ENCODE measurements at regions of chr4 and their contacts with region 1.

Region 1: GRCh38 chr4:164949448-164950143 is 27.9 kb downstream of the TRIM61 start:
- H3K4me3 ChIP-seq: no peak overlapping the region
- H3K27ac ChIP-seq: no peak overlapping the region
- H3K4me1 ChIP-seq: no peaks in the 10 kb centered on the region
- CTCF ChIP-seq: no peak

Region 2: GRCh38 chr4:164856396-164856795 is 93.2 kb before region 1 on chr4:
- CTCF ChIA-PET with region 1: no interaction called
- POLR2A ChIA-PET with region 1: no interaction called
- H3K4me3 ChIP-seq: no peak overlapping the region
- H3K27ac ChIP-seq: no peak overlapping the region
- H3K4me1 ChIP-seq: no peaks in the 10 kb centered on the region
- CTCF ChIP-seq: no peak

Region 3: GRCh38 chr4:164894702-164895101 is 54.9 kb before region 1 on chr4:
- CTCF ChIA-PET with region 1: no interaction called
- POLR2A ChIA-PET with region 1: no interaction called
- H3K4me3 ChIP-seq: no peak overlapping the region
- H3K27ac ChIP-seq: no peak overlapping the region
- H3K4me1 ChIP-seq: no peaks in the 10 kb centered on the region
- CTCF ChIP-seq: no peak

Region 4: GRCh38 chr4:164937576-164938270 is 11.9 kb before region 1 on chr4:
- CTCF ChIA-PET with region 1: interaction called, 10 read pairs
- POLR2A ChIA-PET with region 1: no interaction called
- H3K4me3 ChIP-seq: no peak overlapping the region
- H3K27ac ChIP-seq: no peak overlapping the region
- H3K4me1 ChIP-seq: no peaks in the 10 kb centered on the region
- CTCF ChIP-seq: no peak

Region 5: GRCh38 chr4:165027762-165028402 is 78.3 kb after region 1 on chr4:
- CTCF ChIA-PET with region 1: no interaction called
- POLR2A ChIA-PET with region 1: no interaction called
- H3K4me3 ChIP-seq: no peak overlapping the region
- H3K27ac ChIP-seq: no peak overlapping the region
- H3K4me1 ChIP-seq: no peaks in the 10 kb centered on the region
- CTCF ChIP-seq: no peak

Measured in HEK293 (cell line).